ENCODE measurements at regions of chr16 and their contacts with region 1.

Region 1: GRCh38 chr16:8572919-8573724 is 17.2 kb downstream of the TMEM114 start:
- DNase-seq: peak; percentile 29
- ATAC-seq: peak; percentile 76
- H3K4me3 ChIP-seq: no peak overlapping the region
- H3K27ac ChIP-seq: no peak overlapping the region
- H3K4me1 ChIP-seq: peaks cover 0 to under 1% of the 10 kb centered on the region in 2 experiments; a peak in 1 of 4 replicates
- H3K27me3 ChIP-seq: peaks cover 22% of the 10 kb centered on the region; the same call in 1 of the 2 replicates
- CTCF ChIP-seq: peak; percentile 58 to 80 (median 65)
- POLR2A ChIP-seq: no peak
- RAD21 ChIP-seq: peak; percentile 82

Region 2: DNA sequence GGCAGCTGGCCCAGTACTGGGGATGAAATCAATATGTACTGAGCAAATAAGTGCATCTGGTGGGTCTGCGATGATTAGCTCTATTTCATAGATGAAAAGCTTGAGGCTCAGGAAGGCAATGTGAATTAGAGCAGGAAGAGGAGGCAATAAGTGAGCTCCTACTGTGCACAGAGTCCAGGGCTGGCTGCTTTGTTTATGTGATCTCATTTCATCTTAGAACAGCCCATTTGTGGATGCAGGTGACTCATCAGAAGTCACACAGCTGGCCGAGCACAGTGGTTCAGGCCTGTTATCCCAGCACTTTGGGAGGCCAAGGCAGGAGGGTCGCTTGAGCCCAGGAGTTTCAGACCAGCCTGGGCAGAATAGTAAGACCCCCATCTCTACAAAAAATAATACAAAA is 10.1 kb after region 1 on chr16:
- CTCF ChIA-PET with region 1: interaction called, 10 read pairs
- POLR2A ChIA-PET with region 1: interaction called, 4 read pairs
- RAD21 ChIA-PET with region 1: no interaction called
- intact Hi-C with region 1: no loop called
- DNase-seq: no peak
- ATAC-seq: peak; percentile 58
- H3K4me3 ChIP-seq: no peak overlapping the region
- H3K27ac ChIP-seq: no peak overlapping the region
- H3K4me1 ChIP-seq: peaks cover 0 to 13% of the 10 kb centered on the region in 2 experiments; a peak in 2 of 4 replicates
- H3K27me3 ChIP-seq: no peaks in the 10 kb centered on the region
- CTCF ChIP-seq: no peak
- POLR2A ChIP-seq: no peak
- RAD21 ChIP-seq: no peak

Region 3: DNA sequence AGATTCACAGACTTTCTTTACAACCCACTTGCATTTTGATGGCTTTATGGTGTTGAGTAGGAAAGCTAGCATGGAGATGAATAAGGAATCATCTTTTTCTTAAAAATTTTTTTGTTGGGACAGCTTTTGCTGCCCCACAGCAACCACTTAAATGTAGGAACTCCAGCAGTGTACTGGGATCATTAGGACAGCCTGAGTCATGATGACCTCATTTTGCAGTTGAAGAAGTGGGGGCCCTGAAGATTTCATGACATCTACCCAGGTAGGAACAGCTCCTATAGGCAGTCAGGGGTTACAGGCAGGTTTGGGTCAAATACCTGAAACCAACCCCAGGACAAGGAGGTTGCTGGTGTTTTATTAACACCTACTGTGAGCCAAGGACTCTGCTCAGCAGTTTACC is 50.5 kb after region 1 on chr16:
- CTCF ChIA-PET with region 1: no interaction called
- POLR2A ChIA-PET with region 1: no interaction called
- RAD21 ChIA-PET with region 1: no interaction called
- intact Hi-C with region 1: no loop called
- DNase-seq: no peak
- ATAC-seq: no peak
- H3K4me3 ChIP-seq: no peak overlapping the region
- H3K27ac ChIP-seq: no peak overlapping the region
- H3K4me1 ChIP-seq: peaks cover 7 to 17% of the 10 kb centered on the region in 2 experiments; a peak in 3 of 4 replicates
- H3K27me3 ChIP-seq: no peaks in the 10 kb centered on the region
- CTCF ChIP-seq: no peak
- POLR2A ChIP-seq: no peak
- RAD21 ChIP-seq: no peak

Region 4: GRCh38 chr16:8634991-8635736 is 62.0 kb after region 1 on chr16:
- CTCF ChIA-PET with region 1: interaction called, 4 read pairs
- POLR2A ChIA-PET with region 1: no interaction called
- RAD21 ChIA-PET with region 1: no interaction called
- intact Hi-C with region 1: loop called (anchors 1 kb)
- DNase-seq: no peak
- ATAC-seq: peak; percentile 89
- H3K4me3 ChIP-seq: no peak overlapping the region
- H3K27ac ChIP-seq: no peak overlapping the region
- H3K4me1 ChIP-seq: no peaks in the 10 kb centered on the region
- H3K27me3 ChIP-seq: no peaks in the 10 kb centered on the region
- CTCF ChIP-seq: peak; percentile 79 to 97 (median 85)
- POLR2A ChIP-seq: no peak
- RAD21 ChIP-seq: peak; percentile 42; the same call in 1 of the 2 replicates

Measured in HCT116 (cell line).